ENCODE measurements at regions of chr7 and their contacts with region 1.

Region 1: GRCh38 chr7:33904681-33905388 is 504 bp upstream of the BMPER start:
- DNase-seq: peak; percentile 47
- H3K4me3 ChIP-seq: peak overlapping the region; percentile 49 to 71 (median 69)
- H3K27ac ChIP-seq: no peak overlapping the region
- H3K4me1 ChIP-seq: peaks cover 11% of the 10 kb centered on the region
- H3K27me3 ChIP-seq: peaks cover 15 to 36% of the 10 kb centered on the region in 2 experiments
- CTCF ChIP-seq: peak; percentile 9 to 35
- POLR2A ChIP-seq: no peak

Region 2: GRCh38 chr7:33716581-33717477 is 188.0 kb before region 1 on chr7:
- CTCF ChIA-PET with region 1: interaction called, 4 read pairs
- POLR2A ChIA-PET with region 1: no interaction called
- dilution Hi-C with region 1: no loop called
- intact Hi-C with region 1: loop called (anchors 2 kb)
- DNase-seq: peak; percentile 84
- H3K4me3 ChIP-seq: no peak overlapping the region
- H3K27ac ChIP-seq: no peak overlapping the region
- H3K4me1 ChIP-seq: peaks cover 9% of the 10 kb centered on the region
- H3K27me3 ChIP-seq: no peaks in the 10 kb centered on the region
- CTCF ChIP-seq: peak; percentile 61 to 68
- POLR2A ChIP-seq: no peak

Region 3: GRCh38 chr7:33733870-33734650 is 170.8 kb before region 1 on chr7:
- CTCF ChIA-PET with region 1: no interaction called
- POLR2A ChIA-PET with region 1: no interaction called
- dilution Hi-C with region 1: no loop called
- intact Hi-C with region 1: no loop called
- DNase-seq: peak; percentile 82
- H3K4me3 ChIP-seq: no peak overlapping the region
- H3K27ac ChIP-seq: no peak overlapping the region
- H3K4me1 ChIP-seq: peaks cover 24% of the 10 kb centered on the region
- H3K27me3 ChIP-seq: no peaks in the 10 kb centered on the region
- CTCF ChIP-seq: no peak
- POLR2A ChIP-seq: no peak

Region 4: DNA sequence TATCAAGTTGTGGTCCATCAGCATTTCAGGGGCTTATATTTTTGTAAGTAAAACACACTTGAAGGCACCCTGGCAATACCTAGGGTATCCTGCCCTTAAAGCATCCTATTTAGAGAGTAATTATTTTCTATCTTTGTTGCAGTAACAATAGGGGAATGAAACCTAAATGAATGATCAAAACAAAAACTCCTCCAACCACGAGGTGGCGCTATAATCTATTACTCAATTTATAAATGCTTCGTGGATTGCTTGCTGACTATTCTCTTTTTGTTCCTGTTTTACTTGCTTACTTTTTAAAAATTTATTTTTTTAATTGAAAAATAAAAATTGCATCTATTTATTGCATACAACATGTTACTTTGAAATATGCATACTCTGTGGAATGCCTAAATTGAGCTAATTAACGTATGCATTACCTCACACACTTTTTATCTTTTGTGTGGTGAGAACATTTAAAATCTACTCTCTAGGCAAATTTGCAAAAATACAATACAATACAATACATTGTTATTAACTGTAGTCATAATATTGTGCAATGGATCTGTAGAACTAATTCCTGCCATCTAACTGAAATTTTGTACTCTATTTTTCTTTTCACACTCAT is 147.2 kb before region 1 on chr7:
- CTCF ChIA-PET with region 1: interaction called, 4 read pairs
- POLR2A ChIA-PET with region 1: no interaction called
- dilution Hi-C with region 1: no loop called
- intact Hi-C with region 1: loop called (anchors 2 kb)
- DNase-seq: peak; percentile 58
- H3K4me3 ChIP-seq: no peak overlapping the region
- H3K27ac ChIP-seq: no peak overlapping the region
- H3K4me1 ChIP-seq: peaks cover 8% of the 10 kb centered on the region
- H3K27me3 ChIP-seq: no peaks in the 10 kb centered on the region
- CTCF ChIP-seq: peak; percentile 31 to 35
- POLR2A ChIP-seq: no peak

Region 5: DNA sequence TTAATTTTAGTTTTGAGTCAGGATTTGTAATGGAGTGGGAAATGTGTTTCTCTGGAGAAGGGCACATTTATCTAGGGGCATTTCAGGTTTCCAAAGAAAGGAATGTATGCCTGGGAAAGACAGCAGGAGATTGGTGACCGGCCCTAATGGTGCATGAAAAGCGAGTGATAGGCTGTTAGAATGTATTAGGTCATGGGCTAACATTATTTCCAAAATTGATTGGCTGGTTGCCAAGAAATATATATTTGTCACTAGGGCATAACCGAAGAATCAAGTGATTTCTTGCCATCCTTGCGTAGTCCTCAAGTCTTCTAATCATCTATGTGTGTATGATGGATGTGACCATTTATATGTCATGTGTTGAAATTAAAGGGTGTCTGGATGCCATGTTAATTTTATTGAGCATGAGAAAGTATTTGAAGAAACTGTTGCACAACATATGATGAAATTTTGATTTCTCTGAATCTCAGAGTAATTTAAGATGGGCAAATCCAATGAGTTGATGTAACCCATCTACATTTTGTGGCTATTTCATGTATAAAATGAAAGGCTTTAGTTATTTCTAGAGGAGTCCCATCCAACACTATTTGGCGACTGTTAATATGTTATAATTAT is 248.9 kb after region 1 on chr7:
- CTCF ChIA-PET with region 1: no interaction called
- POLR2A ChIA-PET with region 1: no interaction called
- dilution Hi-C with region 1: no loop called
- intact Hi-C with region 1: no loop called
- DNase-seq: no peak
- H3K4me3 ChIP-seq: no peak overlapping the region
- H3K27ac ChIP-seq: no peak overlapping the region
- H3K4me1 ChIP-seq: no peaks in the 10 kb centered on the region
- H3K27me3 ChIP-seq: no peaks in the 10 kb centered on the region
- CTCF ChIP-seq: no peak
- POLR2A ChIP-seq: no peak